Panc1 (cell line): ENCODE measurements at regions of chr4 and their contacts with region 1.

Region 1: GRCh38 chr4:83012687-83013419 is 2.2 kb upstream of the LIN54 start:
- DNase-seq: peak; percentile 91
- ATAC-seq: peak; percentile 93
- H3K4me3 ChIP-seq: peak overlapping the region; percentile 76 to 80
- H3K27ac ChIP-seq: peak overlapping the region; percentile 96
- H3K4me1 ChIP-seq: peaks cover 9% of the 10 kb centered on the region; the same call in 1 of the 2 replicates
- H3K27me3 ChIP-seq: no peaks in the 10 kb centered on the region
- CTCF ChIP-seq: peak; percentile 58

Region 2: GRCh38 chr4:82890901-82891706 is 121.7 kb before region 1 on chr4 and contains the start of gene SEC31A:
- CTCF ChIA-PET with region 1: no interaction called
- POLR2A ChIA-PET with region 1: interaction called, 13 read pairs
- in situ Hi-C with region 1: no loop called
- intact Hi-C with region 1: no loop called
- DNase-seq: peak; percentile 48
- ATAC-seq: peak; percentile 94
- H3K4me3 ChIP-seq: peak within 1 kb of the TSS; percentile 87 to 90
- H3K27ac ChIP-seq: peak within 1 kb of the TSS; percentile 93
- H3K4me1 ChIP-seq: peaks cover 27% of the 10 kb centered on the region
- H3K27me3 ChIP-seq: no peaks in the 10 kb centered on the region
- CTCF ChIP-seq: no peak
- total RNA-seq, gene SEC31A: 107 TPM

Region 3: DNA sequence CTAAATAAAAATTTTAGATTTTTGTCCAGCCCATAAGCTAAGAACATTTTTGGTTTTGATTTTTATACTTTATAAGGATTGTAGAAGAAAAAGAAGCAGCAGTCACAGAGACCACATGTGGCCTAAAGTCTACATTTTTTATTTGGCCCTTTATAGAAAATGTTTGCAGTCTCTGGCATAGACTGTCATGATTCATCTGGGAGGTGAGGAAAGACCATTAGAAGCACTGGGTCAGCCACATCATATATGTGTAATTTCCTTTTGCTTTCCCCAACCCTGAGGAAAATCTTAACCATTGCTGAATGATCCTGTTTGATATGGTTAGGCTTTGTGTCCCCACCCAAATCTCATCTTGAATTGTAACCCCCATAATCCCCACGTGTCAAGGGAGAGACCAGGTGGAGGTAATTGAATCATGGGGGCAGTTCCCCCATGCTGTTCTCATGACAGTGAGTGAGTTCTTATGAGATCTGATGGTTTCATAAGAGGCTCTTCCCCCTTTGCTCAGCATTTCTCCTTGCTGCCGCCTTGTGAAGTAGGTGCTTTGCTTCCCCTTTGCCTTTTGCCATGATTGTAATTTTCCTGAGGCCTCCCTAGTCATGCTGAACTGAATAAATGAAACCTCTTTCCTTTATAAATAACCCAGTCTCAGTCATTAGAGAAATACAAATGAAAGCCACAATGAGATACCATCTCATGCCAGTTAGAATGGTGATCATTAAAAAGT is 10.0 kb after region 1 on chr4:
- CTCF ChIA-PET with region 1: no interaction called
- POLR2A ChIA-PET with region 1: interaction called, 14 read pairs
- in situ Hi-C with region 1: no loop called
- intact Hi-C with region 1: no loop called
- DNase-seq: no peak
- ATAC-seq: no peak
- H3K4me3 ChIP-seq: no peak overlapping the region
- H3K27ac ChIP-seq: no peak overlapping the region
- H3K4me1 ChIP-seq: no peaks in the 10 kb centered on the region
- H3K27me3 ChIP-seq: no peaks in the 10 kb centered on the region
- CTCF ChIP-seq: no peak

Region 4: GRCh38 chr4:83180431-83180968 is 167.6 kb after region 1 on chr4:
- CTCF ChIA-PET with region 1: no interaction called
- POLR2A ChIA-PET with region 1: no interaction called
- in situ Hi-C with region 1: no loop called
- intact Hi-C with region 1: no loop called
- DNase-seq: no peak
- ATAC-seq: no peak
- H3K4me3 ChIP-seq: no peak overlapping the region
- H3K27ac ChIP-seq: no peak overlapping the region
- H3K4me1 ChIP-seq: no peaks in the 10 kb centered on the region
- H3K27me3 ChIP-seq: no peaks in the 10 kb centered on the region
- CTCF ChIP-seq: no peak